Dorsolateral prefrontal cortex (tissue), 120 donors: ENCODE measurements at regions of chr10 and their contacts with region 1.

Region 1: DNA sequence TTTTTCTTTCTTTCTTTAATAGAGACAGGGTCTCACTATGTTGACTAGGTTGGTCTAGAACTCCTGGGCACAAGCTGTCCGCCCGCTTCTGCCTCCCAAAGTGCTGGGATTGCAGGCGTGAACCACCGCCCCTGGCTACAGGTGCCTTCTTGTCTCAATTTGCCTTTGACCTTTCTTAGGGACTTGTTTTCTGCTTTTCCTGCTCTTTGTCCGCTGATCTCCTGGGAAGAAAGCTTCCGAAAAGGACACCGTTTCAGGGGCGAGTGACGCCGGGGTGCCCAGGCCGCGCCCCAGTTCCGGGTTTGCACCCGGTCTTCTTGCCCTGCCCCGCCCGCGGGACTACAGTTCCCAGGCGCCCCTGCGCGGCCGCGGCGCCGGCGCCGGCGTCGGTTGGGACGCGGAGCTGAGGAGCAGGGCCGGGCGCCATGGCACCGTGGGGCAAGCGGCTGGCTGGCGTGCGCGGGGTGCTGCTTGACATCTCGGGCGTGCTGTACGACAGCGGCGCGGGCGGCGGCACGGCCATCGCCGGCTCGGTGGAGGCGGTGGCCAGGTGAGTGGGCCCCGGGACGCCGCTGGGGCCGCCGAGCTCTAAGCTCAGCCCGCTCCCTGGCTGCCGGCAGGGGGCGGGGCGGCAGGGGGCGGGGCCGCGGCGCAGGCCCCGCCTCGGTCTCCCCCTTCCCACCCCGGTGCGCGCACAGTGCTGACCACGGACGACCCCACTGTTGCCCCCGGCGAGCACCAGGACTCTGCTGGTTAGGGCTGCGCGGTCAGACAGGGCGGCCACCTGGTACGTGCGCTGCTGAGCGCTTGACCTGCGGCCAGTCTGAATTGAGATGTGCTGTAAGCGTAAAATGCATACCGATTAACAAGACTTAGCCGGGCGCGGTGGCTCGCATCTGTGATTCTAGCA is at the start of gene LHPP:
- DNase-seq: peak; percentile 76 to 95 (median 84)
- H3K4me3 ChIP-seq: peak within 1 kb of the TSS; percentile 63 to 98 (median 81)
- H3K27ac ChIP-seq: peak within 1 kb of the TSS; percentile 53 to 96 (median 89)
- H3K27me3 ChIP-seq: no peaks in the 10 kb centered on the region
- CTCF ChIP-seq: peak in 51 of 56 donors; percentile 10 to 89 (median 64)
- total RNA-seq, gene LHPP: 62.4 to 585 (median 134) TPM

Region 2: GRCh38 chr10:124791378-124792348 is 330.0 kb after region 1 on chr10 and contains the start of gene EEF1AKMT2:
- intact Hi-C with region 1: loop called in 1 of 2 experiments (anchors 5 kb)
- DNase-seq: peak; percentile 62 to 88 (median 80)
- H3K4me3 ChIP-seq: peak within 1 kb of the TSS; percentile 61 to 100 (median 93)
- H3K27ac ChIP-seq: peak within 1 kb of the TSS; percentile 48 to 95 (median 86)
- H3K27me3 ChIP-seq: no peaks in the 10 kb centered on the region
- CTCF ChIP-seq: peak in 54 of 56 donors; percentile 10 to 81 (median 56)
- total RNA-seq, gene EEF1AKMT2: 17.5 to 38.9 (median 26.4) TPM